AG04449 (cell line): ENCODE measurements at regions of chr18 and their contacts with region 1.

Region 1: GRCh38 chr18:63119647-63120046 is 199.9 kb downstream of the BCL2 start:
- DNase-seq: no peak
- H3K4me3 ChIP-seq: no peak overlapping the region
- CTCF ChIP-seq: peak; percentile 29

Region 2: DNA sequence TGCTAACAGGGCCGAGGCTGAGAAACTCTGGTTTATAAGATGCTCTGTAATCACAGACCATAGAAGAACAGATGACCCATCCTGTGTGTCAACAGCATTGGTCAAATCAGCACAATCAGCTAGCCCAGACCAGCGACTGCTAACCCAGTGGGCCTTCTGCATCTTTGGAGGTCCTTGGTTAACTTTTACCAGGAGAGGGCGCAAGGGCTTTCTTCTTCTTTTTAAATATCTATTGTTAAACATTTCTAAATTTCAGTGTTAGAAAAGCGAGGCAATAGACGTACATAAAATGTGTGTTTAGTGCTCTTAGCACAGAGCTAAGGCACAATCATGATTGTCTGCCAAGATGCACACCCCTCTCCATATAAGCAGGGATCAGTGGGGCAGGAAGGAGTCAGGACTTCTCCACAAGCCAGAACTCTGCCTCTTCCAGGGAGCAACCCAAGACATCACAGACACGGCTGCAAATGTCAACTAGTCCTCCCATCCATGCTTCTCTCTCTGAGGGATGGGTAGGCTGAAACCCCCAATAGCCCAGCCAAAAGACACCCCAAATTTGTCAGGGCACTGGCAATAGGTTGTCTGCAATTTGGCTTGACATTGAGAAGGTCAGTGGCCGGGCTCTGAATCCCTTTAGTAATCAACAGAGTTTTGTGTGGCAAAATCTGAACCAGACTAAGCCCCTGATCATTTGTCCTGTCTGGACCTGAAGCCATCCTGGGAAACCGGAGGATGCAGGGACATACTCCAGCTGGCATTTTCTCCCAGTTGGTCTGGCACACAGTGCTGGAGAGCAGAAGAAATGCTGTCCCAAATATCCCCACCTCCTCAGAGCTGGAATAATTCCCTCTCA is 11.7 kb after region 1 on chr18:
- CTCF ChIA-PET with region 1: interaction called, 29 read pairs
- POLR2A ChIA-PET with region 1: no interaction called
- DNase-seq: no peak
- H3K4me3 ChIP-seq: no peak overlapping the region
- CTCF ChIP-seq: peak; percentile 49